ENCODE measurements at regions of chr19 and their contacts with region 1.

Region 1: DNA sequence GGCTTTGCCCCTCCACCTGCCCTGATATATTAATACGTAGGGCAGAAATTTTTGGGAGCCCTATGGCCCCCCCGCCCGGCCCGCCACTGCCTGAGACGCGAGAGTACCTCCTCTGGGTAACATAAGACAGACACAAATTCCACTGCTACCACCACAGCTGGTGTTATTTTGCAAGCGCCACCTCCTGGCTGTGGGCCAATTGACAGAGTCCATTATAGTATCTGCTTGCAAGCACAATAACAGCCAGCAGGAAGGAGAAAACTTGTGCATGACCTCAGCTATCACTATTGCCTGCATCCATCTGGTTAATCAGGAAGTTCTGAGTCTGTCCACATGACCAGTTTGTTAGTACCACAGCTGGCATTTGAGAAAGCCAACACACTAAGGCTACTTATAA is 25.3 kb upstream of the OR10H2 start:
- DNase-seq: peak; percentile 83
- ATAC-seq: peak; percentile 86
- H3K4me3 ChIP-seq: peak overlapping the region in 1 of 3 experiments; percentile 43; a peak in 2 of 6 replicates
- H3K27ac ChIP-seq: peak overlapping the region; percentile 72
- H3K4me1 ChIP-seq: peaks cover 28% of the 10 kb centered on the region
- H3K27me3 ChIP-seq: no peaks in the 10 kb centered on the region
- CTCF ChIP-seq: peak; percentile 78
- EP300 ChIP-seq: no peak
- POLR2A ChIP-seq: no peak
- RAD21 ChIP-seq: peak; percentile 28; the same call in 1 of the 2 replicates

Region 2: DNA sequence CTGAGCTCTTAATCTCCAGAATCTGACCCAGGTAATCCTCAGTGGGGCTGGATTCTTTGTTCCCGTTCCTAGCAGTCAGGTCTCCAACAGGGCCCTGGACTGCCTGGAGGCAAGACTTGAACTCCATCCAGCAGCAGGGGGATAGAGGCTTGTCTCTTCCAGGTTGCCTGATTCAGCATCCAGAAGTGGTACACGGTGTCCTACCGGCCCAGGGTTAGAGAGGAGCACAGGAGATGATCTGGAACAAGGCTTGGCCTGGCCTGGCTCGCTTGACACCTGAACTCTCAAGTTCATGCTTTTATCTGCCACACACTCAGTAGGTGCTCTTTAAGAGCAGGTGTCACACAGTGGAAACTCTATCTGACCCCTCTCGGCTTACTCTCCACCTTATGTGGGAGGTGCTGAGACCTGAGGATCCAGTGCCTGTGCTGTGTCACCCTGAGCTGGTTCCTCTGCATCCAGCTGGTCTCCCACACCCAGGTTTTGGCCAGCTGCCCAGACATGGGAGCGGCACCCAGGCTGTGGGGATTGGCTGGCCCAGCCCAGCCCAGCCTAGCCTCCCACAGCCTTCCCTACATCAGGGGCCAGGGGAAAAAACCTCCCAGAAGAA is 62.1 kb before region 1 on chr19 and contains the start of gene CYP4F3:
- CTCF ChIA-PET with region 1: no interaction called
- POLR2A ChIA-PET with region 1: interaction called, 11 read pairs
- in situ Hi-C with region 1: no loop called
- intact Hi-C with region 1: no loop called
- DNase-seq: peak; percentile 81
- ATAC-seq: peak; percentile 81
- H3K4me3 ChIP-seq: peak within 1 kb of the TSS; percentile 57 to 80 (median 61)
- H3K27ac ChIP-seq: peak within 1 kb of the TSS; percentile 90
- H3K4me1 ChIP-seq: peaks cover 76% of the 10 kb centered on the region
- H3K27me3 ChIP-seq: no peaks in the 10 kb centered on the region
- CTCF ChIP-seq: no peak
- EP300 ChIP-seq: peak in 1 of 2 experiments; percentile 46; a peak in 2 of 4 replicates
- POLR2A ChIP-seq: no peak
- RAD21 ChIP-seq: no peak
- total RNA-seq, gene CYP4F3: 5.6 and 17.8 TPM in 2 replicates

Region 3: DNA sequence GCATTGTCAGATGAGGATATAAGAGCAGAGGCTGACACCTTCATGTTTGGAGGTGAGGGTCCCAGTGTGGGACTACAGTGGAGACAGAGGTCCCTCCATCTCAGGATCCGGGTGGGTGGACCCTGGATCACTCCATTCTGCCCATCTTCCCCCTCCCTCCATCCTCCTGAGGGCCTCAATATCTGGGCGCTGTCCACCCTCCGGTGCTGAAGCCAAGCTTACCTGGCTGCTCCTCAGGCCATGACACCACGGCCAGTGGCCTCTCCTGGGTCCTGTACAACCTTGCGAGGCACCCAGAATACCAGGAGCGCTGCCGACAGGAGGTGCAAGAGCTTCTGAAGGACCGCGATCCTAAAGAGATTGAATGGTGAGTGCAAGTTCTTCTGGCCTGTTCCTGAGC is 17.7 kb before region 1 on chr19:
- CTCF ChIA-PET with region 1: no interaction called
- POLR2A ChIA-PET with region 1: no interaction called
- in situ Hi-C with region 1: no loop called
- intact Hi-C with region 1: no loop called
- DNase-seq: no peak
- ATAC-seq: no peak
- H3K4me3 ChIP-seq: no peak overlapping the region
- H3K27ac ChIP-seq: no peak overlapping the region
- H3K4me1 ChIP-seq: peaks cover 25% of the 10 kb centered on the region
- H3K27me3 ChIP-seq: no peaks in the 10 kb centered on the region
- CTCF ChIP-seq: no peak
- EP300 ChIP-seq: no peak
- POLR2A ChIP-seq: no peak
- RAD21 ChIP-seq: no peak

Measured in HepG2 (cell line).